HEK293 (cell line): ENCODE measurements at regions of chr16 and their contacts with region 1.

Region 1: DNA sequence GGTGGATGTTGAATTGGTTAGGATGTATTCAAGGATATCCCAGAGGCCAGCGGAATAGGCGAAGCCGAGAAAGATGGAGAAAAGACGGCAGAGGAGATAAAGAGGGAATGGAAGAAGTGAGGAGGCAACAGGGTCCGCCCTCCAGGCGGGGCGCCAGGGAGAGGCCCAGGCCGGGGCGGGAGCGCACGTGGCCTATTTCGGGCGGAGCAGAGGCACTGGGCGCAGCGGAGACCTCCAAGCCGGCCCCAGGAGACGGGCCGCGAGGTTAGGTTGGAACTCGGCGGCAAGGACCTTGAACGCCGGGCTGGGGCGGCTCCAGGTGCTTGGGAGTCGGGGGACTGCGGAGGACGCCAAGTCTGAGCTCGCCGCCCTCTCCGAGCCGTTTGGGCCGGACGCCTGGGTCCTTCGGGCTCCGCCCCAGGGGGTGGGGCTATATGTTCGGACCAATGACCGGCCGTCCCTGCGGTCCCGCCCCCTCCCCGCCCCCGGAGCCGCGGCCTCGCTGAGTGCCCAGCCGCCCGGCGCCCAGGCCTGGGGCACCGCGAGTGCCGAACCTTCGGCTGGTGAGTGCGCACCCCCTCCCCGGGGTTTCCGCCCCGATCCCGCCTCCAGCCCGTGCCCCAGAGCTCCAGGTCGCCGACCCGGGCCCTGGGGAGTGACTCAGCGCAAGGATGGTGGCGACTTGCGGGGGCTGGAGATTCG is at the start of gene ZNF771:
- H3K4me3 ChIP-seq: peak within 1 kb of the TSS; percentile 82
- H3K27ac ChIP-seq: peak within 1 kb of the TSS; percentile 92
- H3K4me1 ChIP-seq: peaks cover 5% of the 10 kb centered on the region; the same call in 1 of the 2 replicates
- CTCF ChIP-seq: peak; percentile 81

Region 2: GRCh38 chr16:30355144-30355894 is 51.9 kb before region 1 on chr16 and contains the start of gene CD2BP2:
- CTCF ChIA-PET with region 1: interaction called, 7 read pairs
- POLR2A ChIA-PET with region 1: interaction called, 16 read pairs
- H3K4me3 ChIP-seq: peak within 1 kb of the TSS; percentile 95
- H3K27ac ChIP-seq: peak within 1 kb of the TSS; percentile 82
- H3K4me1 ChIP-seq: no peaks in the 10 kb centered on the region
- CTCF ChIP-seq: peak; percentile 63

Region 3: GRCh38 chr16:30370444-30371247 is 36.6 kb before region 1 on chr16 and contains the start of gene TBC1D10B:
- CTCF ChIA-PET with region 1: interaction called, 18 read pairs
- POLR2A ChIA-PET with region 1: interaction called, 32 read pairs
- H3K4me3 ChIP-seq: peak within 1 kb of the TSS; percentile 74
- H3K27ac ChIP-seq: peak within 1 kb of the TSS; percentile 78
- H3K4me1 ChIP-seq: peaks cover 7% of the 10 kb centered on the region
- CTCF ChIP-seq: no peak

Region 4: DNA sequence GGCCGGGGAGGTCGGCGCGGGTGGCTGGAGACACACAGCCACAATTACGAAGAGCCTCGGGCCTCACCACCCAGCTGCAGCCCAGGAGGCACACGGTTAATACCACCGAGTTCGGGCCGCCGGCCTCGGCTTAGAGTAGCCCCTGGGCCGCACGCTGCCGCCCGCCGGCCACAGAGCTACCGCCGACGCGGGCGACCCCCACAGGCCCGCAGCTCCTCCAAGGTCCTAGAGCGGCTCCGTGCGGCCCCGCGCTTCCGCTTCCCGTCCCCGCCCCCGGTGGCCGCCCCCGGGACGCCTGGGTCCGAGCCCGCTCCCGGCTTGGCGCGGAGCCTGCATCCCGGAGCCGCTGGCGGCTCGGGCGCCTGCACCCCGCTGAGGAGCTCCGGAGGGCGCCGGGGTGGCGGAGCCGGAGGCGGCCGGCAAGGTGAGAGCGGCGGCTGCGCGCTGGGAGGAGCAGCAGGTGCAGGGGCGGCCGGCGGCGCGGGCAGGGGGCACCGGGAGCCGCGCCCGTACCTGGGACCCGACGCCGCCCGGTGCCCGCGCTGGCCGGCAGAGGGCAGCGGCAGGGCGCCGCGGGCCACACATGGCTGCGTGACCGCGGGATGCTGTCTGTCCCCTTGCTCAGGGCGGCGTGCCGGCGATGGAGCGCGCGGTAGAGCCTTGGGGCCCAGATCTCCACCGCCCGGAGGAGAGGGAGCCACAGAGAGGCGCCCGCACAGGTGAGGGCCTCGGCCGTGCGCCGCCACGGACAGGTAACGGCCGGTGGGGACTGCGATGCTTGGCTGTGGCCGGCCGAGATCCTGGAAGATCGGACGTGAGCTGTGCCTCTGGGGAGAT is 11.9 kb before region 1 on chr16 and contains the start of gene ZNF48:
- CTCF ChIA-PET with region 1: interaction called, 27 read pairs
- POLR2A ChIA-PET with region 1: interaction called, 44 read pairs
- H3K4me3 ChIP-seq: peak within 1 kb of the TSS; percentile 71
- H3K27ac ChIP-seq: peak within 1 kb of the TSS; percentile 84
- H3K4me1 ChIP-seq: peaks cover 16% of the 10 kb centered on the region
- CTCF ChIP-seq: peak; percentile 94

Region 5: DNA sequence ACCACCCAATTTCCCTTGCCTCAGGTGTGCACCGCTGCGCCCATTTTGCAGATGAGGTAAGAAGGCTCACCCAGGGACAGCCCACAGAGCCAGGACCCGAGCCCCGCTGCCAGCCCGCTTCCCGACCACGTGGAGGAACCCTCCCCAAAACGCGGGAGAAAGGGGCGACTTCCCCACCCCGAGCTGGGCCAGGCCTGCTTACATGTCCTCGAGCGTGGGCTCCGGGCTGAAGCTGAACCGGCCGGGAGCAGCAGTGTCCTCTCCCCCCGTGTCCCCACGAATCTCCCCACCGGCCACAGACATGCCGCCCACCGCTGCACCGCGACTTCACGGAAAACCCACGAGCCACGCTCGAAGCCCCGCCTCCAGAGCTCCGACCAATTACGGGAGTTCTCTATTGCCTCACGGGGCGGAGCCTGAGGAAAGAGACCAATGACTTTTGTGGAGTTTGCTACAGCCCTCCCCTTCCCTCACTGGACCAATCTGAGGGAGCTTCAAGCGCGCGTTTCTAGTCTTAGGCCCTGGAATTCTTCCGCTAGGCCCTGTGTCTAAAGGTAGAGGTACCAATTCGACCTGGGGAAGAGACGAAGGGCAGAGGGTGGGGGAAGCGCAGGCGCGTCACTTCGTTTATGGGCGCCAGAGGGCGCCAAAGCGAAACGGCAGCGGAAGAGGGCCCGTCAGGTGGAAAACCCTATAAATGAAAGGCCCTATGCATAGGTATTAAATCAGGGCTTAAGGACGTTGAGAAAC is 22.6 kb after region 1 on chr16 and contains the start of gene DCTPP1:
- CTCF ChIA-PET with region 1: interaction called, 14 read pairs
- POLR2A ChIA-PET with region 1: interaction called, 11 read pairs
- H3K4me3 ChIP-seq: peak within 1 kb of the TSS; percentile 76
- H3K27ac ChIP-seq: peak within 1 kb of the TSS; percentile 12; the same call in 1 of the 2 replicates
- H3K4me1 ChIP-seq: no peaks in the 10 kb centered on the region
- CTCF ChIP-seq: peak; percentile 99

Region 6: GRCh38 chr16:30615358-30616091 is 208.3 kb after region 1 on chr16:
- CTCF ChIA-PET with region 1: interaction called, 12 read pairs
- POLR2A ChIA-PET with region 1: interaction called, 7 read pairs
- H3K4me3 ChIP-seq: no peak overlapping the region
- H3K27ac ChIP-seq: no peak overlapping the region
- H3K4me1 ChIP-seq: no peaks in the 10 kb centered on the region
- CTCF ChIP-seq: peak; percentile 95